Ascending aorta (tissue), 2 donors: ENCODE measurements at regions of chr12 and their contacts with region 1.

Region 1: GRCh38 chr12:98998697-98999299 is 353.7 kb downstream of the APAF1 start:
- DNase-seq: no peak
- H3K4me3 ChIP-seq: no peak overlapping the region
- H3K27ac ChIP-seq: no peak overlapping the region
- H3K4me1 ChIP-seq: no peaks in the 10 kb centered on the region
- H3K27me3 ChIP-seq: no peaks in the 10 kb centered on the region
- CTCF ChIP-seq: peak; percentile 25 to 64 (median 42)

Region 2: GRCh38 chr12:98698603-98699463 is 300.0 kb before region 1 on chr12:
- intact Hi-C with region 1: loop called (anchors 2 kb)
- DNase-seq: peak in 1 of 2 donors; percentile 73
- H3K4me3 ChIP-seq: peak overlapping the region in 1 of 2 donors; percentile 27
- H3K27ac ChIP-seq: peak overlapping the region; percentile 37 to 59
- H3K4me1 ChIP-seq: peaks cover 4 to 14% of the 10 kb centered on the region in 2 donors
- H3K27me3 ChIP-seq: no peaks in the 10 kb centered on the region
- CTCF ChIP-seq: peak; percentile 30 to 59 (median 34)

Region 3: GRCh38 chr12:98725476-98726247 is 273.1 kb before region 1 on chr12:
- intact Hi-C with region 1: loop called (anchors 10 kb)
- DNase-seq: no peak
- H3K4me3 ChIP-seq: no peak overlapping the region
- H3K27ac ChIP-seq: no peak overlapping the region
- H3K4me1 ChIP-seq: no peaks in the 10 kb centered on the region
- H3K27me3 ChIP-seq: no peaks in the 10 kb centered on the region
- CTCF ChIP-seq: peak in 2 of 3 experiments; percentile 25 to 30